Tibial artery (tissue), 4 donors: ENCODE measurements at regions of chr6 and their contacts with region 1.

Region 1: GRCh38 chr6:21831521-21832291 is 238.2 kb downstream of the SOX4 start:
- DNase-seq: no peak
- H3K4me3 ChIP-seq: no peak overlapping the region
- H3K27ac ChIP-seq: no peak overlapping the region
- H3K4me1 ChIP-seq: peaks cover 0 to 8% (median 3%) of the 10 kb centered on the region in 4 donors
- H3K27me3 ChIP-seq: no peaks in the 10 kb centered on the region
- CTCF ChIP-seq: no peak

Region 2: GRCh38 chr6:21754891-21755290 is 76.8 kb before region 1 on chr6:
- intact Hi-C with region 1: no loop called
- DNase-seq: no peak
- H3K4me3 ChIP-seq: no peak overlapping the region
- H3K27ac ChIP-seq: no peak overlapping the region
- H3K4me1 ChIP-seq: peaks cover 0 to 24% (median 0%) of the 10 kb centered on the region in 4 donors
- H3K27me3 ChIP-seq: no peaks in the 10 kb centered on the region
- CTCF ChIP-seq: no peak

Region 3: GRCh38 chr6:21898107-21898796 is 66.5 kb after region 1 on chr6:
- intact Hi-C with region 1: no loop called
- DNase-seq: no peak
- H3K4me3 ChIP-seq: no peak overlapping the region
- H3K27ac ChIP-seq: no peak overlapping the region
- H3K4me1 ChIP-seq: no peaks in the 10 kb centered on the region
- H3K27me3 ChIP-seq: no peaks in the 10 kb centered on the region
- CTCF ChIP-seq: no peak

Region 4: GRCh38 chr6:22949967-22950366 is 1118.3 kb after region 1 on chr6:
- intact Hi-C with region 1: loop called (anchors 5 kb)
- DNase-seq: no peak
- H3K4me3 ChIP-seq: no peak overlapping the region
- H3K27ac ChIP-seq: no peak overlapping the region
- H3K4me1 ChIP-seq: peaks cover 0 to 13% (median 0%) of the 10 kb centered on the region in 4 donors
- H3K27me3 ChIP-seq: no peaks in the 10 kb centered on the region
- CTCF ChIP-seq: no peak